Head of caudate nucleus (tissue), 42 donors: ENCODE measurements at regions of chr17 and their contacts with region 1.

Region 1: GRCh38 chr17:58402047-58402446 is 15.3 kb downstream of the RNF43 start:
- DNase-seq: no peak

Region 2: GRCh38 chr17:58352014-58352842 is 49.8 kb before region 1 on chr17 and contains the start of gene SUPT4H1:
- intact Hi-C with region 1: loop called (anchors 10 kb)
- DNase-seq: peak; percentile 74 to 95 (median 87)